Heart left ventricle (tissue), 16 donors: ENCODE measurements at regions of chr3 and their contacts with region 1.

Region 1: DNA sequence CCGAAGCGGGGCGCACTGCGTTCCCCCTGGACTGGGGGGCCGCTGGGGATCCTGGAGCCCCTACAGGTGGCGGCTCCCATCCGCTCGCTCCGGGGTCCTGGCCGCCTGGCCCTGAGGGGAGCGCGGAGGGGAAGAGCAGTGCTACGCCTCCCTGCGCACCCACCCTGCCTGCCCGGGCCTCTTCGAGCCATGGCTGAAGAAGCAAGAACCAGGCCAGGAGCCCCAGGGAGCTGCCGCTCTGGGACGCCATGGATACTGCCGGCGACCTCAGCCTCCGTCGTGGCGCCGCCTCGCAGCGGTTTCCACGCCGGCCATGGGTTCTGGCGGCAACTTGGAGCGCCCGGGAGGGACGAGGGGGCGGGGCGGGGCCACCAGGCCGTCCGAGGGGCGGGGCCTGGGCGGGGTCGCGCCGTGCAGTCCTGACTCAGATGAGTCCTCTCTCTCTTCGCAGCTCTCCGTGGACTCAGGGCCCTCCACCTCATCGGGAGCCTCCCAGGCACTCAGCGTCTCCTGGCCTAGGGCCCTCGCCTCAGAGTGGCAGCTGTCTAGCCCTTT is 50.9 kb downstream of the MYL3 start:
- DNase-seq: peak; percentile 57 to 80 (median 67)
- ATAC-seq: peak; percentile 23 to 76 (median 69)
- H3K4me3 ChIP-seq: peak overlapping the region in 10 of 12 donors; percentile 16 to 51 (median 32)
- H3K27ac ChIP-seq: no peak overlapping the region
- H3K4me1 ChIP-seq: peaks cover 0 to 24% (median 12%) of the 10 kb centered on the region in 12 donors
- H3K27me3 ChIP-seq: peaks cover 0 to 20% (median 0%) of the 10 kb centered on the region in 9 donors
- CTCF ChIP-seq: no peak
- POLR2A ChIP-seq: no peak

Region 2: DNA sequence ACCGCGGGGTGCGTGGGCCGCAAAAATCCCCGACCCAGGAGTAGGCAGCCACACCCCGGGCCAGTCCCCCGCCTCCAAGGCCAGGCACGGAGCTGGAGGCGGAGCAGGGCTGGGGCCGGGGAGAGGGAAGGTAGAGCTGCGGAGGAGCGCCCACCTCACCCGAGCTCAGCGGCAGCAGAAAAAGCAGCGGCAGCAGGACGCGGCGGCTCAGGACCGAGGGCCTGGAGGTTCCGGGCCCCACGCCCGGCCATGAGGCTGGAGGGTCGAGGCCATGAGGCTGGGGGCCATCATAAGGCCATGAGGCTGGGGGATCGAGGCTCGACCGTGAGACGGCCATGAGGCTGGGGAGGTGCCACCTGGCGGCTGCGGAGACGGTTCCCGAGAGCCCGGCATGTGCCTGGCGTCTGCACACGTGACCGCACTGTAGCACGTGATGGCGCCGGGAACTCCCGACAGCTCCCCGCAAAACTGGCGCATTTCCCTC is 61.7 kb before region 1 on chr3:
- intact Hi-C with region 1: loop called in 1 of 10 experiments (anchors 1 kb)
- DNase-seq: no peak
- ATAC-seq: no peak
- H3K4me3 ChIP-seq: no peak overlapping the region
- H3K27ac ChIP-seq: no peak overlapping the region
- H3K4me1 ChIP-seq: no peaks in the 10 kb centered on the region
- H3K27me3 ChIP-seq: no peaks in the 10 kb centered on the region
- CTCF ChIP-seq: no peak
- POLR2A ChIP-seq: no peak